ENCODE measurements at regions of chr6 and their contacts with region 1.

Region 1: DNA sequence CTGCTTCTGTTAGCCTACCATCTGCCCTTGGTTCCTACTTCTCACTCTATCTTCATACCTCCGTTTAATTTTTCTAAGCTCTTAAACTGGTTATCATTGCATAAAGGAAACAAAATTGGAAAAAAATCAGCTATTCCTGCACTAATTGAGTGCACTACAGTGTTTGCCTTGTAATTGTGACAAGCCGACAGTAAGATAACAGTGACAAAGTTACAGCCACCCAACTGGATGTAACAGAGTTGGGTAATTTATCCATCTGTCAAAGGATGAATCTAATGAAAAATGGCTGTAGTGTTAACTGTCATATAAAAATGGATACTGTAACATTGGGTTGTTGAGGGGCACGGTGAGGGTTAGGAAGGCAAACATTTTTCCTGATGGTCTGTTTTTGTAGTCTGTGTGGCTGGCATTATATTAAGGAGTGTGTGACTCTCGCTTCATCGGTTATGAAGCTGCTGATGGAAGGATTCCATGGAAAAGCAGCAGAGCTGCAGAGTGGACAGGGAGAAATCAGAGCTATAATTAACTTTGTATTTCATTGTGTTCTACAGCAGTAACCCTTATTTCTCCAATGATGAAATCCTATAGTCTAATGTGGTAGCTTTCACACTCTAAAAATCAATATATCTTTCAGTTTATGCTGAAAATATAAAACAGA is 12.7 kb downstream of the PBOV1 start:
- DNase-seq: no peak
- ATAC-seq: no peak
- H3K4me3 Mint-ChIP-seq: no peak overlapping the region
- H3K27ac Mint-ChIP-seq: no peak overlapping the region
- H3K4me1 Mint-ChIP-seq: no peaks in the 10 kb centered on the region
- H3K27me3 Mint-ChIP-seq: peaks cover 27% of the 10 kb centered on the region

Region 2: DNA sequence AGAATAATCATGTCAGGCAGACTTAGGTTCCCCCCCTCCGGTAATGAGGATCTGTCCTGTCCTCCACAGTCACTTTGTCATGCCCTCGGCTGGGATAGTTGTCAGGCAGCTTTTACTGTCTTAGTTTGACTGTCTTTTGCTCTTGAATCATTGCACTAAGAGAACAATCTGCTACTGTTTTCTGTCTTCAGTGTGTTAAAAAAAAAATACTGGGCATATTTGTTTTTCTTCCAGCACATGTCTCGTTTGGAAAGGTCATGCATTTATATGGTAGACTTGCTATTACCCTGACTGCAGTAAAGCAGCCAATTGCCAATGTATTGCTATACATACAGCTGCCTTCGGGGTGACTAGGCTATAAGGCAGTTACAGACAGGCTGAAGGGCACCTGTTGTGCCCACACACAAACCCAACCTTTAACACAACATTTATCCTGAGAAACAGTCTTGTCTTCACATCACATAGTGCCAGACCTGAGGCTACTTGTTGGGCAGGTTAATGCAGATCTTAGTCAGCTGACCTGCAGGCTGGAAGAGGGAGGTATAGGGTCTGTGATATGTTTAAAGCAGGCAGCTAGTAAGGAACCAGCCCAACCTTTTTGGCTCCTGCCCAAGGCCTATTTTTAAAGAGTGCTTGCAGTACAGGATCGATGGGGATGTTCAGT is 17.2 kb before region 1 on chr6:
- CTCF ChIA-PET with region 1: no interaction called
- POLR2A ChIA-PET with region 1: interaction called, 10 read pairs
- DNase-seq: no peak
- ATAC-seq: no peak
- H3K4me3 Mint-ChIP-seq: no peak overlapping the region
- H3K27ac Mint-ChIP-seq: no peak overlapping the region
- H3K4me1 Mint-ChIP-seq: no peaks in the 10 kb centered on the region
- H3K27me3 Mint-ChIP-seq: peaks cover 10% of the 10 kb centered on the region

Measured in activated CD8-positive, alpha-beta T cell treated with anti-CD3 and anti-CD28 coated beads, Interleukin-2, amount 10 ng/mL, durations not matched to agents 7 days and 5 days (primary cell).